ENCODE measurements at regions of chr18 and their contacts with region 1.

Region 1: GRCh38 chr18:78242254-78242643 is 737.4 kb upstream of the SALL3 start:
- DNase-seq: no peak
- H3K4me3 Mint-ChIP-seq: no peak overlapping the region
- H3K27ac Mint-ChIP-seq: no peak overlapping the region
- H3K4me1 Mint-ChIP-seq: no peaks in the 10 kb centered on the region
- H3K27me3 Mint-ChIP-seq: no peaks in the 10 kb centered on the region
- CTCF ChIP-seq: no peak

Region 2: DNA sequence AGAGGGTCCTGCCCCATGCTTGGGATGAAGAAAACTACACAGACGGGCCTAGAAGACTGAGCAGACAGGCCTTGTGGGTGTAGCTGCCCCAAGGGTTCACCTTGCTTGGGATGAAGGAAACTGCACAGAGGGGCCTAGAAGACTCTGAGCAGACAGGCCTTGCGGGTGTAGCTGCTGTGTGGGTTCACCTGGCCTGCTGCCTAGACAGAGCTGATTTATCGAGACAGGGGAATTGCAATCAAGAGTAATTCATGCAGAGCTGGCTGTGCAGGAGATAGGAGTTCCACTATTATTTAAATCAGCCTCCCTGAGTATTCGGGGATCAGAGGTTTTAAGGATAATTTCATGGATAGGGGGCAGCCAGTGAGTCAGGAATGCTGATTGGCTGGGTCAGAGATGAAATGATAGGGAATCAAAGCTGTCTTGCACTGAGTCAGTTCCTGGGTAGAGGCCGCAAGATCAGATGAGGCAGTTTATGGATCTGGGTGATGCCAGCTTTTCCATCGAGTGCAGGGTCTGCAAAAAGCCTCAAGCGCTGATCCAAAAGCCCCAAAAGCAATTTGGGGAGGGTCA is 651.2 kb before region 1 on chr18:
- CTCF ChIA-PET with region 1: no interaction called
- intact Hi-C with region 1: loop called (anchors 10 kb)
- DNase-seq: no peak
- H3K4me3 Mint-ChIP-seq: no peak overlapping the region
- H3K27ac Mint-ChIP-seq: no peak overlapping the region
- H3K4me1 Mint-ChIP-seq: no peaks in the 10 kb centered on the region
- H3K27me3 Mint-ChIP-seq: no peaks in the 10 kb centered on the region
- CTCF ChIP-seq: no peak

Region 3: DNA sequence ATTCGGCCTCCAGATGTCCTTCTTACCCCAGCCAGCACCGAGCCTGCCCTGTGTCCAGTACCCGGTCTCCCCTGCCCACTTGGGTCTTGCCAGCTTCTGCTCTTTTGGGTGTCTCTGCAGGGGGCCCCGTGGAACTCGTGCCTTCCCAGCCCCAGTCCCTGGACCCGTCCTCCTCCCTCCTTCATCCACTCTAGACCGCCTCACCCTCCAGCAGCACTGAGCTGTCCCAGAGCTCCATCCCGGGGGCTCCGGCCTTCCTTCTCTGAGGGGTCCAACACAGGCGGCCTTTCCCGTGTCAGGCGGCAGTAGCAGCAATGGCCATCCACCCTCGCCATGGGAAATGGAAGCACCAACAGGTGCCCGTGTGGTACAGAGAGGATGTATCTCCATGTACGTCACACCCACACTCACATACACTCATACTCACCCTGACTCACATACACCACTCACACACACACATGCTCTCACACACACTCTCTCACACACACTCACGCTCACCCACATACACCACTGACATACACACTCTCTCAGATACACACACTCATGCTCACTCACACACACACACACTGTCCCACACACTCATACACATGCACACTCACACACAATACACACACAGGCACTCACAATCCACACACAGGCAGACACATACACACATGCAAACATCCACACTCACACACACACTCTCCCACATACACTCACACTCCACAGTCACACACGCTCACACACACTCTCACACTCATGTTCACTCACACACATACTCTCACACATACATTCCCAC is 90.1 kb before region 1 on chr18:
- CTCF ChIA-PET with region 1: no interaction called
- intact Hi-C with region 1: no loop called
- DNase-seq: no peak
- H3K4me3 Mint-ChIP-seq: no peak overlapping the region
- H3K27ac Mint-ChIP-seq: no peak overlapping the region
- H3K4me1 Mint-ChIP-seq: no peaks in the 10 kb centered on the region
- H3K27me3 Mint-ChIP-seq: no peaks in the 10 kb centered on the region
- CTCF ChIP-seq: no peak

Measured in Calu3 (cell line).